ENCODE measurements at regions of chr1 and their contacts with region 1.

Region 1: GRCh38 chr1:207084701-207085180 is 3.9 kb upstream of the C4BPB start:
- DNase-seq: peak; percentile 66
- H3K4me3 ChIP-seq: no peak overlapping the region
- H3K27ac ChIP-seq: no peak overlapping the region
- H3K4me1 ChIP-seq: peaks cover 21% of the 10 kb centered on the region
- H3K27me3 ChIP-seq: no peaks in the 10 kb centered on the region
- CTCF ChIP-seq: peak; percentile 18 to 51 (median 44)
- POLR2A ChIP-seq: no peak

Region 2: DNA sequence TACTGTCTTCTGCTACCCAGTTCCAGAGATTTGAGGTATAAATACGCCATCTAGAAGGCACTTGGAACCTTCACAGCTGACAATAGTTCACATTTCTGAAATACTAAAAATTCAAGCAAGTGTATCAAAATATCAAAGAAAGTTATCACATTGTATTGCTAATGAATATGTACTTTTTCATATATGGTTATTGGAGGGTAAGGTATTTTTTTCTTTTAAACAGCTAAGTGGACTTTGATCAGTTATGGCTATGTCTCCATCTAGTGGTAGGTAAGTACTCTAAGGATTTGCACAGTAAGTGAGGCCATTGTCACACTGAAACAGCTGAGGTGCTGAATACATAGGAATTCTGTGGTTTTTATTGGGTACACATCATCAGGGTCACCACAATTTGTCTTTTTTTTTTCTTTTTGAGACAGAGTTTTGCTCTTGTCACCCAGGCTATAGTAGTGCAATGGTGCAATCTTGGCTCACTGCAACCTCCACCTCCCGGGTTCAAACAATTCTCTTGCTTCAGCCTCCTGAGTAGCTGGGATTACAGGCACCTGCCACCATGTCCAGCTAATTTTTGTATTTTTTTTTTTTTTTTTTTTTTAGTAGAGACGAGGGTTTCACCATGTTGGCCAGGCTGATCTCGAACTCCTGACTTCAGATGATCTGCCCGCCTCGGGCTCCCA is 320.2 kb after region 1 on chr1:
- intact Hi-C with region 1: loop called (anchors 10 kb)
- DNase-seq: no peak
- H3K4me3 ChIP-seq: no peak overlapping the region
- H3K27ac ChIP-seq: no peak overlapping the region
- H3K4me1 ChIP-seq: no peaks in the 10 kb centered on the region
- H3K27me3 ChIP-seq: no peaks in the 10 kb centered on the region
- CTCF ChIP-seq: peak; percentile 35 to 72 (median 41)
- POLR2A ChIP-seq: no peak